ENCODE measurements at regions of chr9 and their contacts with region 1.

Region 1: GRCh38 chr9:121107041-121107440 is 32.3 kb downstream of the CNTRL start:
- DNase-seq: peak in 7 of 9 donors; percentile 21 to 68 (median 55)
- ATAC-seq: peak; percentile 94
- H3K4me3 ChIP-seq: no peak overlapping the region
- H3K4me3 Mint-ChIP-seq: no peak overlapping the region
- H3K27ac ChIP-seq: no peak overlapping the region
- H3K27ac Mint-ChIP-seq: peak overlapping the region in 8 of 9 donors; percentile 36 to 88 (median 61)
- H3K4me1 ChIP-seq: no peaks in the 10 kb centered on the region
- H3K4me1 Mint-ChIP-seq: peaks cover 15 to 29% (median 27%) of the 10 kb centered on the region in 7 donors
- H3K27me3 ChIP-seq: no peaks in the 10 kb centered on the region
- H3K27me3 Mint-ChIP-seq: no peaks in the 10 kb centered on the region

Region 2: DNA sequence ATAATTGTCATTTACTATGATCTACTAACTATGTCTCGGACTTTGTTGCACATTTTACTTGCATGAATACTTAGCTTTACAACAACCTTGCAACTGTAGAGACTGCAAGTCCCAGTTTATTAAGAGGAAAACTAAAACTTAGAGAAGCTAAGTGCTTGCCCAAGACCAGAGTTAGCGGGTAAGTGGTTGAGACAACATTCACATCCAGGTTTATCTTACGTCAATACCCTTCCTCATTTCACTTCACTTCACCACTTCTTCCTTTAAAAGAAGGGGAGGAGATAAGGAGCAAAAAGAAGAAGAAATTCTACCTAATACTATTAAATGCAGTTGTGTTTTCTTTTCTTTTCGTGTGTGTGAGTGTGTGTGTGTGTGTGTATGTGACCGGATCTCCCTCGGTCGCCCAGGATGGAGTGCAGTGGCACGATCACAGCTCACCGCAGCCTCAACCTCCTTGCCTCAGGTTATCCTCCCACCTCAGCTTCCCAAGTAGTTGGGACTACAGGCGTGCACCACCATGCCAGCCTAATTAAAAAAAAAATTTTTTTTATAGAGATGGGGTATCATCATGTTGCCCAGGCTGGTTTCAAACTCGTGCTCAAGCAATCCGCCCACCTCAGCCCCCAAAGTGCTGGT is 430.2 kb before region 1 on chr9:
- CTCF ChIA-PET with region 1: no interaction called
- POLR2A ChIA-PET with region 1: no interaction called
- intact Hi-C with region 1: no loop called
- DNase-seq: no peak
- ATAC-seq: peak; percentile 57
- H3K4me3 ChIP-seq: no peak overlapping the region
- H3K4me3 Mint-ChIP-seq: no peak overlapping the region
- H3K27ac ChIP-seq: no peak overlapping the region
- H3K27ac Mint-ChIP-seq: no peak overlapping the region
- H3K4me1 ChIP-seq: no peaks in the 10 kb centered on the region
- H3K4me1 Mint-ChIP-seq: peaks cover 0 to 13% (median 4%) of the 10 kb centered on the region in 7 donors
- H3K27me3 ChIP-seq: no peaks in the 10 kb centered on the region
- H3K27me3 Mint-ChIP-seq: no peaks in the 10 kb centered on the region

Region 3: GRCh38 chr9:120998111-120998510 is 108.9 kb before region 1 on chr9:
- CTCF ChIA-PET with region 1: no interaction called
- POLR2A ChIA-PET with region 1: no interaction called
- intact Hi-C with region 1: loop called in 1 of 2 experiments (anchors 1 kb)
- DNase-seq: no peak
- ATAC-seq: no peak
- H3K4me3 ChIP-seq: no peak overlapping the region
- H3K4me3 Mint-ChIP-seq: no peak overlapping the region
- H3K27ac ChIP-seq: no peak overlapping the region
- H3K27ac Mint-ChIP-seq: no peak overlapping the region
- H3K4me1 ChIP-seq: no peaks in the 10 kb centered on the region
- H3K4me1 Mint-ChIP-seq: no peaks in the 10 kb centered on the region
- H3K27me3 ChIP-seq: no peaks in the 10 kb centered on the region
- H3K27me3 Mint-ChIP-seq: peaks cover 0 to 6% (median 0%) of the 10 kb centered on the region in 5 donors

Region 4: GRCh38 chr9:121133149-121133816 is 26.2 kb after region 1 on chr9:
- CTCF ChIA-PET with region 1: interaction called, 6 read pairs
- POLR2A ChIA-PET with region 1: interaction called, 5 read pairs
- intact Hi-C with region 1: loop called in 1 of 2 experiments (anchors 1 kb)
- DNase-seq: peak; percentile 39 to 88 (median 79)
- ATAC-seq: peak; percentile 99
- H3K4me3 ChIP-seq: peak overlapping the region; percentile 51
- H3K4me3 Mint-ChIP-seq: peak overlapping the region; percentile 21 to 82 (median 74)
- H3K27ac ChIP-seq: peak overlapping the region; percentile 46
- H3K27ac Mint-ChIP-seq: peak overlapping the region; percentile 76 to 99 (median 90)
- H3K4me1 ChIP-seq: peaks cover 23 to 40% of the 10 kb centered on the region in 2 donors
- H3K4me1 Mint-ChIP-seq: peaks cover 48 to 90% (median 82%) of the 10 kb centered on the region in 7 donors
- H3K27me3 ChIP-seq: no peaks in the 10 kb centered on the region
- H3K27me3 Mint-ChIP-seq: no peaks in the 10 kb centered on the region

Region 5: GRCh38 chr9:121156263-121156731 is 49.3 kb after region 1 on chr9:
- CTCF ChIA-PET with region 1: no interaction called
- POLR2A ChIA-PET with region 1: no interaction called
- intact Hi-C with region 1: loop called in 1 of 2 experiments (anchors 5 kb)
- DNase-seq: no peak
- ATAC-seq: peak; percentile 59
- H3K4me3 ChIP-seq: no peak overlapping the region
- H3K4me3 Mint-ChIP-seq: peak overlapping the region in 2 of 10 donors; percentile 14 to 46
- H3K27ac ChIP-seq: no peak overlapping the region
- H3K27ac Mint-ChIP-seq: peak overlapping the region in 8 of 9 donors; percentile 29 to 90 (median 72)
- H3K4me1 ChIP-seq: peaks cover 5 to 8% of the 10 kb centered on the region in 2 donors
- H3K4me1 Mint-ChIP-seq: peaks cover 14 to 56% (median 45%) of the 10 kb centered on the region in 7 donors
- H3K27me3 ChIP-seq: no peaks in the 10 kb centered on the region
- H3K27me3 Mint-ChIP-seq: no peaks in the 10 kb centered on the region

Region 6: GRCh38 chr9:121169094-121169601 is 62.1 kb after region 1 on chr9:
- CTCF ChIA-PET with region 1: interaction called, 9 read pairs
- POLR2A ChIA-PET with region 1: interaction called, 3 read pairs
- intact Hi-C with region 1: loop called in 1 of 2 experiments (anchors 2 kb)
- DNase-seq: peak in 7 of 9 donors; percentile 20 to 46 (median 41)
- ATAC-seq: peak; percentile 85
- H3K4me3 ChIP-seq: no peak overlapping the region
- H3K4me3 Mint-ChIP-seq: peak overlapping the region in 7 of 10 donors; percentile 21 to 70 (median 53)
- H3K27ac ChIP-seq: peak overlapping the region; percentile 67
- H3K27ac Mint-ChIP-seq: peak overlapping the region; percentile 38 to 94 (median 84)
- H3K4me1 ChIP-seq: peaks cover 0 to 23% of the 10 kb centered on the region in 2 donors
- H3K4me1 Mint-ChIP-seq: peaks cover 10 to 29% (median 25%) of the 10 kb centered on the region in 7 donors
- H3K27me3 ChIP-seq: no peaks in the 10 kb centered on the region
- H3K27me3 Mint-ChIP-seq: no peaks in the 10 kb centered on the region

Region 7: GRCh38 chr9:121213136-121213806 is 106.2 kb after region 1 on chr9:
- CTCF ChIA-PET with region 1: interaction called, 3 read pairs
- POLR2A ChIA-PET with region 1: no interaction called
- intact Hi-C with region 1: loop called in 1 of 2 experiments (anchors 1 kb)
- DNase-seq: peak; percentile 19 to 69 (median 51)
- ATAC-seq: peak; percentile 87
- H3K4me3 ChIP-seq: no peak overlapping the region
- H3K4me3 Mint-ChIP-seq: no peak overlapping the region
- H3K27ac ChIP-seq: no peak overlapping the region
- H3K27ac Mint-ChIP-seq: peak overlapping the region in 4 of 9 donors; percentile 7 to 49 (median 19)
- H3K4me1 ChIP-seq: no peaks in the 10 kb centered on the region
- H3K4me1 Mint-ChIP-seq: peaks cover 0 to 20% (median 11%) of the 10 kb centered on the region in 7 donors
- H3K27me3 ChIP-seq: no peaks in the 10 kb centered on the region
- H3K27me3 Mint-ChIP-seq: no peaks in the 10 kb centered on the region

Measured in naive thymus-derived CD4-positive, alpha-beta T cell (primary cell).